PC-3 (cell line): ENCODE measurements at regions of chr14 and their contacts with region 1.

Region 1: GRCh38 chr14:74571901-74572725 is 39.9 kb downstream of the LTBP2 start:
- DNase-seq: peak; percentile 97
- ATAC-seq: peak; percentile 80
- H3K4me3 ChIP-seq: peak overlapping the region; percentile 57
- H3K27ac ChIP-seq: peak overlapping the region; percentile 98
- H3K4me1 ChIP-seq: peaks cover 69% of the 10 kb centered on the region
- H3K27me3 ChIP-seq: no peaks in the 10 kb centered on the region
- CTCF ChIP-seq: no peak

Region 2: GRCh38 chr14:74190907-74191575 is 381.1 kb before region 1 on chr14:
- CTCF ChIA-PET with region 1: no interaction called
- POLR2A ChIA-PET with region 1: no interaction called
- intact Hi-C with region 1: no loop called
- DNase-seq: no peak
- ATAC-seq: no peak
- H3K4me3 ChIP-seq: no peak overlapping the region
- H3K27ac ChIP-seq: no peak overlapping the region
- H3K4me1 ChIP-seq: no peaks in the 10 kb centered on the region
- H3K27me3 ChIP-seq: no peaks in the 10 kb centered on the region
- CTCF ChIP-seq: no peak

Region 3: GRCh38 chr14:74493343-74494261 is 78.5 kb before region 1 on chr14 and contains the start of gene ISCA2:
- CTCF ChIA-PET with region 1: interaction called, 3 read pairs
- POLR2A ChIA-PET with region 1: interaction called, 5 read pairs
- intact Hi-C with region 1: loop called (anchors 1 kb)
- DNase-seq: peak; percentile 99
- ATAC-seq: peak; percentile 89
- H3K4me3 ChIP-seq: peak within 1 kb of the TSS; percentile 93
- H3K27ac ChIP-seq: peak within 1 kb of the TSS; percentile 19; the same call in 1 of the 2 replicates
- H3K4me1 ChIP-seq: peaks cover 46% of the 10 kb centered on the region
- H3K27me3 ChIP-seq: no peaks in the 10 kb centered on the region
- CTCF ChIP-seq: no peak
- total RNA-seq, gene ISCA2: 30.1 and 32.3 TPM in 2 replicates

Region 4: GRCh38 chr14:74531467-74531866 is 40.6 kb before region 1 on chr14:
- CTCF ChIA-PET with region 1: no interaction called
- POLR2A ChIA-PET with region 1: no interaction called
- intact Hi-C with region 1: no loop called
- DNase-seq: peak; percentile 56
- ATAC-seq: peak; percentile 82
- H3K4me3 ChIP-seq: no peak overlapping the region
- H3K27ac ChIP-seq: no peak overlapping the region
- H3K4me1 ChIP-seq: peaks cover 8% of the 10 kb centered on the region
- H3K27me3 ChIP-seq: no peaks in the 10 kb centered on the region
- CTCF ChIP-seq: peak; percentile 51

Region 5: DNA sequence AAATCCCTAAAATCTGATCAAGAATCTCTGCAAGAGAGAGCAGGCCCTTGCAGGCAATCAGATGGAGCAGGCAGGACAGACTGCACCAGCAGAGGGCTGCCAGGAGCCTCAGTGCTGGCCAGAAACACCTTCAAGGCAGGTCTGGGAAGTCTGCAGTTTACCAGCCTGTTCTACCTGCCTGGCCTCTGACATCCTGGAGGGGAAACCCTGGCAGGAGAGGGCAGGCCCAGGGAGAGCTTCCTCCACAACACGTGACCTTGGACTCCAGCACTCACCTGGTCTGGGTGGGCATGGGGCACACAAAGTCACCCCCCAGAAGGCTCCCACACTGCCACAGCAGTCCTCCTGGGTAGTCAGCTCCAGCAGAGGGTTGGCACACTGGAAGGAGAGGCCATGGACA is 22.5 kb before region 1 on chr14:
- CTCF ChIA-PET with region 1: no interaction called
- POLR2A ChIA-PET with region 1: no interaction called
- intact Hi-C with region 1: loop called (anchors 1 kb)
- DNase-seq: peak; percentile 71
- ATAC-seq: peak; percentile 98
- H3K4me3 ChIP-seq: no peak overlapping the region
- H3K27ac ChIP-seq: no peak overlapping the region
- H3K4me1 ChIP-seq: peaks cover 14% of the 10 kb centered on the region
- H3K27me3 ChIP-seq: no peaks in the 10 kb centered on the region
- CTCF ChIP-seq: peak; percentile 74

Region 6: GRCh38 chr14:74601983-74602382 is 29.9 kb after region 1 on chr14:
- CTCF ChIA-PET with region 1: no interaction called
- POLR2A ChIA-PET with region 1: no interaction called
- intact Hi-C with region 1: no loop called
- DNase-seq: no peak
- ATAC-seq: no peak
- H3K4me3 ChIP-seq: no peak overlapping the region
- H3K27ac ChIP-seq: no peak overlapping the region
- H3K4me1 ChIP-seq: no peaks in the 10 kb centered on the region
- H3K27me3 ChIP-seq: no peaks in the 10 kb centered on the region
- CTCF ChIP-seq: no peak